HepG2 (cell line): ENCODE measurements at regions of chr15 and their contacts with region 1.

Region 1: GRCh38 chr15:55434989-55435825 is 26.9 kb downstream of the PIERCE2 start:
- DNase-seq: peak; percentile 54
- ATAC-seq: peak; percentile 92
- H3K4me3 ChIP-seq: no peak overlapping the region
- H3K27ac ChIP-seq: no peak overlapping the region
- H3K4me1 ChIP-seq: no peaks in the 10 kb centered on the region
- H3K27me3 ChIP-seq: no peaks in the 10 kb centered on the region
- CTCF ChIP-seq: peak; percentile 70
- EP300 ChIP-seq: no peak
- POLR2A ChIP-seq: no peak
- RAD21 ChIP-seq: peak; percentile 46; the same call in 1 of the 2 replicates

Region 2: GRCh38 chr15:55290528-55291057 is 144.6 kb before region 1 on chr15:
- CTCF ChIA-PET with region 1: interaction called, 5 read pairs
- POLR2A ChIA-PET with region 1: no interaction called
- in situ Hi-C with region 1: no loop called
- intact Hi-C with region 1: loop called (anchors 2 kb)
- DNase-seq: peak; percentile 71
- ATAC-seq: peak; percentile 90
- H3K4me3 ChIP-seq: peak overlapping the region; percentile 80 to 82 (median 81)
- H3K27ac ChIP-seq: peak overlapping the region; percentile 62
- H3K4me1 ChIP-seq: peaks cover 16% of the 10 kb centered on the region
- H3K27me3 ChIP-seq: no peaks in the 10 kb centered on the region; a peak in 1 of 5 replicates
- CTCF ChIP-seq: peak; percentile 92
- EP300 ChIP-seq: no peak
- POLR2A ChIP-seq: no peak
- RAD21 ChIP-seq: peak; percentile 87

Region 3: GRCh38 chr15:55649054-55649423 is 213.8 kb after region 1 on chr15:
- CTCF ChIA-PET with region 1: no interaction called
- POLR2A ChIA-PET with region 1: no interaction called
- in situ Hi-C with region 1: no loop called
- intact Hi-C with region 1: no loop called
- DNase-seq: no peak
- ATAC-seq: no peak
- H3K4me3 ChIP-seq: no peak overlapping the region
- H3K27ac ChIP-seq: no peak overlapping the region
- H3K4me1 ChIP-seq: no peaks in the 10 kb centered on the region
- H3K27me3 ChIP-seq: no peaks in the 10 kb centered on the region
- CTCF ChIP-seq: no peak
- EP300 ChIP-seq: no peak
- POLR2A ChIP-seq: no peak
- RAD21 ChIP-seq: no peak